ENCODE measurements at regions of chr11 and their contacts with region 1.

Region 1: DNA sequence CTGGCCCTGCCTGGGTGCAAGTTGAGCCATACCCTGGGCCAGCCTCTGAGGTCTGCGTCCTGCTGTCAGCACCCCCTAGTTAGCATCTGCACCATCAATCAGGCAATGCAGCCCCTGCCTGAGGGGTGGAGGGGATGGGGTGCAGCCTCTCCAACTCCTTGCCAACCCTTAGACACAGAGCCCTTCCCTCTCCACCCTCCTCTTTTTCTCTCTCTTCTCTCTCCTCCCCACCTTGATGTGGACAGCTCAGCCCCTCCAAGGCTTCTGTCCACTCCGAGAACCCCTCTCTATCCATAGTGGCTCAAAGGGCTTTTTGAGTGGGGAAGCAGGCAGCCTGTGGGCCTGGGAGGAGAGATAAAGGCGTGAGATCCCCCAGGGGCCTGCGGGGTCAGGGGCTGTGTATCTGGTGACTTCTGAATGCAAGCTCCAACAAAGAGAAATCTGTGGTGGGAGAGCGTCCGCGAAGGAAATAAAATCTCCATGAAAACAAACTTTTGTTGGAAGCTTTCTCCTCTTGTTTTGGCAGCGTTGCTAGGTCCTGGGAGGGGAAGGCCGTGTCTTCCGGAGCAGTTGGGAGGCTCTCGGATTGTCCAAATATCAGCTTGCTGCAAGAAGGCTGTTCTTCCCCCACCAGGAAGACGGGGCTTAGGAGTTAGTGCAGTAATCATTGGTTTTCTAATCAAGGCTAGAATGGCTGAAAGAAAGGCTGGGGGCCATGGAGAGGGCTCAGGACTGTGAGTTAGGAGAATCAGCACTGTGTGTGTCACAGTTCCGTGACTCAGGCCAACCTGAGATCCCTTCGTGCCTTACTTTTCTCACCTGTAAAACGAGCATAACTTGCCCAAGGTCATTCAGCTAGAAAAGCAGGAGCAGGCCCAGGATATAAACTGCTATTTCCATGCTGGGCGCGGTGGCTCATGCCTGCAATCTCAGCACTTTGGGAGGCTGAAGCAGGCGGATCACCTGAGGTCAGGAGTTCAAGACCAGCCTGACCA is 50.3 kb downstream of the PKNOX2 start:
- DNase-seq: peak in 3 of 5 donors; percentile 61 to 70 (median 62)
- ATAC-seq: peak; percentile 61 to 77 (median 74)
- H3K4me3 ChIP-seq: peak overlapping the region in 3 of 12 donors; percentile 1 to 25 (median 14)
- H3K27ac ChIP-seq: peak overlapping the region in 10 of 12 donors; percentile 10 to 71 (median 46)
- H3K4me1 ChIP-seq: peaks cover 0 to 45% (median 23%) of the 10 kb centered on the region in 12 donors
- H3K27me3 ChIP-seq: no peaks in the 10 kb centered on the region
- CTCF ChIP-seq: no peak
- POLR2A ChIP-seq: no peak

Region 2: GRCh38 chr11:125164422-125165110 is 50.3 kb before region 1 on chr11 and contains the start of gene PKNOX2:
- intact Hi-C with region 1: loop called in 3 of 10 experiments (anchors 5 to 10 kb)
- DNase-seq: peak; percentile 78 to 91 (median 84)
- ATAC-seq: peak; percentile 23 to 85 (median 82)
- H3K4me3 ChIP-seq: peak within 1 kb of the TSS; percentile 54 to 86 (median 68)
- H3K27ac ChIP-seq: peak within 1 kb of the TSS; percentile 35 to 86 (median 80)
- H3K4me1 ChIP-seq: peaks cover 0 to 47% (median 24%) of the 10 kb centered on the region in 12 donors
- H3K27me3 ChIP-seq: peaks cover 0 to 48% (median 2%) of the 10 kb centered on the region in 9 donors
- CTCF ChIP-seq: peak; percentile 37 to 84 (median 62)
- POLR2A ChIP-seq: peak in 1 of 2 donors; percentile 38
- total RNA-seq, gene PKNOX2: 3.1 to 9.4 (median 5.0) TPM

Region 3: GRCh38 chr11:125170510-125171031 is 44.3 kb before region 1 on chr11:
- intact Hi-C with region 1: loop called in 3 of 10 experiments (anchors 5 to 10 kb)
- DNase-seq: peak; percentile 66 to 83 (median 76)
- ATAC-seq: peak; percentile 56 to 83 (median 76)
- H3K4me3 ChIP-seq: peak overlapping the region in 6 of 12 donors; percentile 4 to 32 (median 22)
- H3K27ac ChIP-seq: peak overlapping the region in 11 of 12 donors; percentile 38 to 86 (median 77)
- H3K4me1 ChIP-seq: peaks cover 0 to 47% (median 23%) of the 10 kb centered on the region in 12 donors
- H3K27me3 ChIP-seq: peaks cover 0 to 24% (median 0%) of the 10 kb centered on the region in 9 donors
- CTCF ChIP-seq: no peak
- POLR2A ChIP-seq: no peak

Region 4: GRCh38 chr11:125192183-125192582 is 22.7 kb before region 1 on chr11:
- intact Hi-C with region 1: no loop called
- DNase-seq: no peak
- ATAC-seq: peak in 2 of 4 donors; percentile 47 to 61
- H3K4me3 ChIP-seq: no peak overlapping the region
- H3K27ac ChIP-seq: no peak overlapping the region
- H3K4me1 ChIP-seq: peaks cover 0 to 10% (median 2%) of the 10 kb centered on the region in 12 donors
- H3K27me3 ChIP-seq: peaks cover 0 to 2% (median 0%) of the 10 kb centered on the region in 9 donors
- CTCF ChIP-seq: no peak
- POLR2A ChIP-seq: no peak